HCT116 (cell line): ENCODE measurements at regions of chr5 and their contacts with region 1.

Region 1: GRCh38 chr5:151051066-151051930 is 29.5 kb downstream of the TNIP1 start:
- DNase-seq: peak; percentile 56
- ATAC-seq: peak; percentile 89
- H3K4me3 ChIP-seq: no peak overlapping the region
- H3K27ac ChIP-seq: no peak overlapping the region
- H3K4me1 ChIP-seq: no peaks in the 10 kb centered on the region
- H3K27me3 ChIP-seq: no peaks in the 10 kb centered on the region
- CTCF ChIP-seq: peak; percentile 88 to 96 (median 95)
- POLR2A ChIP-seq: no peak
- RAD21 ChIP-seq: peak; percentile 93

Region 2: DNA sequence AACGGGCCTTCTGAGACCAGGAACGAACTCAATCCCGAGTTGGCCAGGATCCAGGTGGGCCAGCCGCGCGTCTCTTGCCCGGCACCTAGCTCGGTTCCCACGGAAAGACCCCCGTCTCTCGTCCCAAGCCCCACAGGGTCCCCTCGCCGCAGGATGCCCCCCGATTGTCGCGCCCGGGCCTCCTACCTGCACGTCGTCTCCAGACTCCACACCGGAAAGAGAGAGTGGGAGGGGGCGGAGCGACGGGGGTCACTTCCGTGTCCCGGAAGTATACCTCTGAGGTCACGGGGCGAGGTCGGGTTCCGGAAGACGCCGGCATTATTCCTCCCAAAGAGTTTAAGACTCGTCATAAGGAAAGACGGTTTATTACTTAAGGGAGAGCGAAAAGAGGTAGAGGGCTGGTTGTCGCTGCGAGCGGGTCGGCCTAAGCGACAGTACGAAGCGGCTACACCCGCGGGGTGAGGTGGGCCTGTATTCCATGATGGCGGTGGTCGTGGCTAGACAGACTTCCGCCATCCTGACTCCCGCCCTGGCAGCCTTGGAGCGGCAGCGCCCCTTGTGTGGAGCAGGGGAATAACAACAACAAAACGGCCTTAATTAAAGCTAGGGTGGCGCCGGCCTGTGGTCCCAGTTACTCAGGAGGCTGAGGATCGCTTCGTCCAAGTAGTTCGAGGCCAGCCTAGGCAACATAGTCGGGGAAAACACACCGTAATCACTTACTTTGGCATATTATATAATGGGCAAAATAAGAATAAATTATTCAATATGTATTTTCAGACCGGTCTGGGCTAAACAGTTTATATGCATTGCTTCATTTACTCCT is 601.6 kb before region 1 on chr5 and contains the start of gene RPS14:
- CTCF ChIA-PET with region 1: no interaction called
- POLR2A ChIA-PET with region 1: no interaction called
- RAD21 ChIA-PET with region 1: no interaction called
- intact Hi-C with region 1: loop called (anchors 10 kb)
- DNase-seq: peak; percentile 89
- ATAC-seq: peak; percentile 88
- H3K4me3 ChIP-seq: peak within 1 kb of the TSS; percentile 94 to 96
- H3K27ac ChIP-seq: peak within 1 kb of the TSS; percentile 86
- H3K4me1 ChIP-seq: peaks cover 3 to 26% of the 10 kb centered on the region in 2 experiments; a peak in 3 of 4 replicates
- H3K27me3 ChIP-seq: no peaks in the 10 kb centered on the region
- CTCF ChIP-seq: peak in 2 of 3 experiments; percentile 81 to 83; a peak in 4 of 6 replicates
- POLR2A ChIP-seq: peak; percentile 77
- RAD21 ChIP-seq: no peak
- total RNA-seq, gene RPS14: 2,557 TPM

Region 3: GRCh38 chr5:150774145-150774544 is 277.2 kb before region 1 on chr5:
- CTCF ChIA-PET with region 1: no interaction called
- POLR2A ChIA-PET with region 1: no interaction called
- RAD21 ChIA-PET with region 1: no interaction called
- intact Hi-C with region 1: no loop called
- DNase-seq: no peak
- ATAC-seq: no peak
- H3K4me3 ChIP-seq: no peak overlapping the region
- H3K27ac ChIP-seq: no peak overlapping the region
- H3K4me1 ChIP-seq: peaks cover 6 to 13% of the 10 kb centered on the region in 2 experiments; a peak in 3 of 4 replicates
- H3K27me3 ChIP-seq: no peaks in the 10 kb centered on the region
- CTCF ChIP-seq: no peak
- POLR2A ChIP-seq: no peak
- RAD21 ChIP-seq: no peak

Region 4: DNA sequence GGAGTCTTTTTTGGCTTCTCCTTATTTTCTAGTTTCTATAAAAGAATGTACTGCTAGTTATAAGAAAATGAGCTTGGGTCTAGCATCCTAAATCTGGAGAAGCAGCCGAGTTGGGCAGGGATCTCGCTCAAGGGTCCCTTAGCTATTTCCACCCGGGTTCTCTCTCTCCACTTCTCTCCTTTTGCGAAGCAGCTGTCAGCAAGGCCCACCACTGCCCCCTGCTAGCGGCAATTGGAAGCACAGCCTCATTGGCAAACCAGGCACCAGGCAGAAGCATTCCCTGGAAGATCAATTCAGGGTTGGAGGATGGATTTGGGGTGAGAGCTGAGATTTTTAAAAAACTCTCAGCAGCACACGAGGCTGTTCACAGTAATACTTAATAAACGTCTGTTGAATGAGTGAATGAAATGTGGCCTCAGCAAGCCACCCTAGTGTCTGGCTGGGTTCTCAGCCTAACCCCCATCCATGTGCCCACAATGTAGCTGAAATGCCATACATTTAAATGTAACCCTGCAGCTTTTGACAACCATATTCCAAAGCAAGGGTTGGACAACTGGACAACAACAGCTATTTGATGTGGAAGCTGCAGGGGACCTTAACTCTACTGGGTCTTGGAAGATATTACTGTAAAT is 64.1 kb after region 1 on chr5:
- CTCF ChIA-PET with region 1: interaction called, 171 read pairs
- POLR2A ChIA-PET with region 1: interaction called, 3 read pairs
- RAD21 ChIA-PET with region 1: interaction called, 13 to 16 read pairs
- intact Hi-C with region 1: loop called (anchors 1 kb)
- DNase-seq: peak; percentile 32
- ATAC-seq: peak; percentile 93
- H3K4me3 ChIP-seq: no peak overlapping the region
- H3K27ac ChIP-seq: no peak overlapping the region
- H3K4me1 ChIP-seq: no peaks in the 10 kb centered on the region
- H3K27me3 ChIP-seq: no peaks in the 10 kb centered on the region
- CTCF ChIP-seq: peak; percentile 94 to 96 (median 95)
- POLR2A ChIP-seq: no peak
- RAD21 ChIP-seq: peak; percentile 97

Region 5: DNA sequence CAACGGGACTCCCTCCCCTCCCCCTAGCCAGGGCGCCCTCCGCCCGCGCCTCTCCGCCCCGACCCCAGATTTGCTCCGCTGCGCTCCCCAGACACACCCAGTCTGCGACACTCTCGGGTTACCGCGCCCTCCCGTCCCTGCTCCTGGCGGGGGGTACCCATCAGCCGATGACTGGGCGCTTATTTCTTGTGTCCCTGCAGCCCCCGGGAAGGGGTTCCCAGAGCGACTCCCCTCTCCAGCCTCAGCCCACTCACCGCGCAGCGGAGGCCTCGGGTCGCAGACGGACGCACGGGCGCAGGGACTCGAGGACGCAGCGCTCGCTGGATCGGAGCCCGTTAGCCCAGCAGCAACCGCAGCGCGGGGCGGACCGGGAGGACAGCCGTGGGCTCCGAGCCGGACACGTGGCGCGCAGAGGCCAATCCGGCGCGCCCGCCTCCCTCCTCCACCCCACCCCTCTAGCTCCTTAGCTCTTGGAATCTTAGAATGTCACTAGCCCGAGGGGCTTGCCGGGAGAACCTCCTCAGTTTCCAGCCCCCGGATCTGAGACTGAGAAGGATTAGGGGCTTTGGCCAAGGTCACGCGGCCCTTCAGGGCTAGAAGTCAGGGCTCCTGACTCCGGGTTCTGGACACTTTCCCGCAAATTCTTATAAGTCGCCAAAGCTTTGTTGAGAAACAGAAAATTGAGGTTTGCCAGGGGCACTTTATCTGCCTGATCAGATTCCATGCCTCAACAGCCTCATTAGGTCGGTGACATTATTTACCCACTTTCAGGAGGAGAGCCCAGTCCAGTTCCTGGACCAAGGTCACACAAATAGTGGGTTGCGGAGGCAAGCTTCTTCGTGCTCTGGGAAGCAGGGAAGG is 106.4 kb after region 1 on chr5 and contains the start of gene ANXA6:
- CTCF ChIA-PET with region 1: interaction called, 6 read pairs
- POLR2A ChIA-PET with region 1: no interaction called
- RAD21 ChIA-PET with region 1: no interaction called
- intact Hi-C with region 1: loop called (anchors 1 kb)
- DNase-seq: peak; percentile 45
- ATAC-seq: peak; percentile 96
- H3K4me3 ChIP-seq: peak within 1 kb of the TSS; percentile 71 to 74
- H3K27ac ChIP-seq: peak within 1 kb of the TSS; percentile 45
- H3K4me1 ChIP-seq: peaks cover 19 to 36% of the 10 kb centered on the region in 2 experiments
- H3K27me3 ChIP-seq: no peaks in the 10 kb centered on the region
- CTCF ChIP-seq: no peak
- POLR2A ChIP-seq: peak; percentile 71
- RAD21 ChIP-seq: no peak
- total RNA-seq, gene ANXA6: 71.9 TPM

Region 6: GRCh38 chr5:151164686-151165392 is 113.5 kb after region 1 on chr5:
- CTCF ChIA-PET with region 1: interaction called, 28 read pairs
- POLR2A ChIA-PET with region 1: no interaction called
- RAD21 ChIA-PET with region 1: interaction called in 1 of 2 experiments, 3 read pairs
- intact Hi-C with region 1: loop called (anchors 2 kb)
- DNase-seq: peak; percentile 77
- ATAC-seq: peak; percentile 99
- H3K4me3 ChIP-seq: no peak overlapping the region
- H3K27ac ChIP-seq: no peak overlapping the region
- H3K4me1 ChIP-seq: peaks cover 0 to 8% of the 10 kb centered on the region in 2 experiments; a peak in 2 of 4 replicates
- H3K27me3 ChIP-seq: no peaks in the 10 kb centered on the region
- CTCF ChIP-seq: peak; percentile 91 to 95 (median 91)
- POLR2A ChIP-seq: no peak
- RAD21 ChIP-seq: peak; percentile 98

Region 7: DNA sequence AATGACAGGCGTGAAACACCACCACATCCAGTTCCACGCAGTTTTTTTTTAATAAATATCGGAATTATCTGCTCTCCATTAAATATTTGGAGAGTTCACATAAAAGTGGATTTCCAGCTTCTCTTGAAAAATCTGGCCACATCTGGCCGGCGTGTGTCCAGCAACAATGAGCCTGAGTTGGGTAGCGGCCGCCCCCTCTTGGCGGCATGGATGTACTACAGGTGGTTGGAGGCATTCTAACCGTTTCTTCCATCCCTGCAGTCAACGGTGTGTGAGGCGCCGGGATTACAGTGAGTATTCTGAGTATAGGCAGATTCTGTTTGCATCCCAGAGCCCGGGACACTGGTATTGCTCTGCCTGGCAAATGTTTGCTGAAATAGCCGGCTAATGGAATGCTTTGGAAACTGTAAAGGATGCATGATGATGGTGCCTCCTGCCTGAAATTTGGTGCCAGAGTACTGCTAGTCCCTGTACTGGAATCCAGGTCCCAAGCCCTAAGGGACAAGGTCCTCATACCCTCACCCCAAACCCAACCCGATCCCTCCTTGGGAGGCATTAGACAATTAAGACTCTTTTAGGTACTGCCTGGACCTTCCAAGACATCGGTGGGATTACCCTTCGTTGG is 188.1 kb after region 1 on chr5:
- CTCF ChIA-PET with region 1: interaction called, 5 read pairs
- POLR2A ChIA-PET with region 1: no interaction called
- RAD21 ChIA-PET with region 1: no interaction called
- intact Hi-C with region 1: loop called (anchors 2 kb)
- DNase-seq: peak; percentile 34
- ATAC-seq: peak; percentile 95
- H3K4me3 ChIP-seq: no peak overlapping the region
- H3K27ac ChIP-seq: no peak overlapping the region
- H3K4me1 ChIP-seq: peaks cover 8 to 9% of the 10 kb centered on the region in 2 experiments; a peak in 2 of 4 replicates
- H3K27me3 ChIP-seq: no peaks in the 10 kb centered on the region
- CTCF ChIP-seq: peak; percentile 83 to 93 (median 90)
- POLR2A ChIP-seq: no peak
- RAD21 ChIP-seq: peak; percentile 91